CD4-positive, alpha-beta memory T cell (primary cell): ENCODE measurements at regions of chr11 and their contacts with region 1.

Region 1: GRCh38 chr11:83193315-83194280 is at the start of gene ANKRD42:
- DNase-seq: peak; percentile 88 to 92 (median 90)
- H3K4me3 ChIP-seq: peak within 1 kb of the TSS; percentile 90 to 99
- H3K4me3 Mint-ChIP-seq: peak within 1 kb of the TSS; percentile 98 to 100 (median 99)
- H3K27ac ChIP-seq: peak within 1 kb of the TSS; percentile 99
- H3K27ac Mint-ChIP-seq: peak within 1 kb of the TSS; percentile 99 to 100 (median 100)
- H3K4me1 ChIP-seq: peaks cover 39% of the 10 kb centered on the region
- H3K4me1 Mint-ChIP-seq: peaks cover 35 to 53% (median 41%) of the 10 kb centered on the region in 4 donors
- H3K27me3 ChIP-seq: no peaks in the 10 kb centered on the region
- H3K27me3 Mint-ChIP-seq: no peaks in the 10 kb centered on the region
- total RNA-seq, gene ANKRD42: 8.9 to 12.4 TPM

Region 2: DNA sequence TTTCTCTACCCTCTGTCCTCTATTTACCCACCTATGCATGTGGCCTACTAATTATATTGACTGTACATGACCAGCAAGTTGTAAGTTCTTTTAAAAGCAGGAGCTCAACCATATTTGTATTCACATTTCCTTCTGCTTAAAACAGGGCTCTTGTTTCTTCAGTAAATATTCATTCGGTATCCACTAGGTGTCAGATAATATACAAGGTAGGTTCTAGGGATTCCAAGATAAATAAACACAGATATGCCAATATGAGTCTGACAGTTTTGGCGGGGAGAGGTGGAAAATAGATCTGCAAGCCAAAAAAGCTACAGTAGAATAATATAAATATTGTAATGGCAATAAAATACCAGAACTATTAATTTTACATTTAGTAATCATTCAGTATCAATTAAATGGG is 106.6 kb before region 1 on chr11:
- CTCF ChIA-PET with region 1: no interaction called
- POLR2A ChIA-PET with region 1: no interaction called
- intact Hi-C with region 1: loop called (anchors 5 kb)
- DNase-seq: no peak
- H3K4me3 ChIP-seq: no peak overlapping the region
- H3K4me3 Mint-ChIP-seq: no peak overlapping the region
- H3K27ac ChIP-seq: no peak overlapping the region
- H3K27ac Mint-ChIP-seq: peak overlapping the region in 2 of 7 donors; percentile 32 to 58
- H3K4me1 ChIP-seq: no peaks in the 10 kb centered on the region
- H3K4me1 Mint-ChIP-seq: peaks cover 0 to 13% (median 11%) of the 10 kb centered on the region in 4 donors
- H3K27me3 ChIP-seq: no peaks in the 10 kb centered on the region
- H3K27me3 Mint-ChIP-seq: no peaks in the 10 kb centered on the region

Region 3: GRCh38 chr11:83102834-83103233 is 90.8 kb before region 1 on chr11:
- CTCF ChIA-PET with region 1: no interaction called
- POLR2A ChIA-PET with region 1: no interaction called
- intact Hi-C with region 1: no loop called
- DNase-seq: no peak
- H3K4me3 ChIP-seq: no peak overlapping the region
- H3K4me3 Mint-ChIP-seq: no peak overlapping the region
- H3K27ac ChIP-seq: no peak overlapping the region
- H3K27ac Mint-ChIP-seq: no peak overlapping the region
- H3K4me1 ChIP-seq: no peaks in the 10 kb centered on the region
- H3K4me1 Mint-ChIP-seq: no peaks in the 10 kb centered on the region
- H3K27me3 ChIP-seq: no peaks in the 10 kb centered on the region
- H3K27me3 Mint-ChIP-seq: peaks cover 2 to 7% of the 10 kb centered on the region in 2 donors

Region 4: DNA sequence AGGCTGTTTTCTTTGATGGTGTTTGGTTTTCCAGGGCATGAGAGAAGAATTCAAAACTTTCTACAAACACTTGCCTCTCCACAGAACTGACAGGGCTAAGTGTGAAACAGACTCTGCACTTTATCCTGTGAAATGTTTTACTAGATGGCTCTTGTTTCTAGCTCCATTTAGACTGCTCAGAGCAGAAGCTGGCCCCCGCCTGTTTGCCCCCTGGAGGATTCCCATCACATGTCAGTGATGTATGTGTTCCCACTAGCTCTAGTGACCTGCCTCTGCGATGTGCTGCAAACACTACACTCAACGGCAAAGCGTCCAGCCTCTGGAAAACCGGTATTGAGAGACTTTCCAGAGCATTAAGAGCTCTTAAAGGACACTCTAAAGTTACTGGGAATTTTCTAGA is 78.0 kb before region 1 on chr11:
- CTCF ChIA-PET with region 1: no interaction called
- POLR2A ChIA-PET with region 1: no interaction called
- intact Hi-C with region 1: loop called (anchors 1 kb)
- DNase-seq: no peak
- H3K4me3 ChIP-seq: no peak overlapping the region
- H3K4me3 Mint-ChIP-seq: peak overlapping the region; percentile 25 to 81 (median 64)
- H3K27ac ChIP-seq: no peak overlapping the region
- H3K27ac Mint-ChIP-seq: peak overlapping the region in 4 of 7 donors; percentile 54 to 84 (median 75)
- H3K4me1 ChIP-seq: peaks cover 44% of the 10 kb centered on the region
- H3K4me1 Mint-ChIP-seq: peaks cover 33 to 54% (median 34%) of the 10 kb centered on the region in 4 donors
- H3K27me3 ChIP-seq: no peaks in the 10 kb centered on the region
- H3K27me3 Mint-ChIP-seq: peaks cover 0 to 1% of the 10 kb centered on the region in 2 donors

Region 5: DNA sequence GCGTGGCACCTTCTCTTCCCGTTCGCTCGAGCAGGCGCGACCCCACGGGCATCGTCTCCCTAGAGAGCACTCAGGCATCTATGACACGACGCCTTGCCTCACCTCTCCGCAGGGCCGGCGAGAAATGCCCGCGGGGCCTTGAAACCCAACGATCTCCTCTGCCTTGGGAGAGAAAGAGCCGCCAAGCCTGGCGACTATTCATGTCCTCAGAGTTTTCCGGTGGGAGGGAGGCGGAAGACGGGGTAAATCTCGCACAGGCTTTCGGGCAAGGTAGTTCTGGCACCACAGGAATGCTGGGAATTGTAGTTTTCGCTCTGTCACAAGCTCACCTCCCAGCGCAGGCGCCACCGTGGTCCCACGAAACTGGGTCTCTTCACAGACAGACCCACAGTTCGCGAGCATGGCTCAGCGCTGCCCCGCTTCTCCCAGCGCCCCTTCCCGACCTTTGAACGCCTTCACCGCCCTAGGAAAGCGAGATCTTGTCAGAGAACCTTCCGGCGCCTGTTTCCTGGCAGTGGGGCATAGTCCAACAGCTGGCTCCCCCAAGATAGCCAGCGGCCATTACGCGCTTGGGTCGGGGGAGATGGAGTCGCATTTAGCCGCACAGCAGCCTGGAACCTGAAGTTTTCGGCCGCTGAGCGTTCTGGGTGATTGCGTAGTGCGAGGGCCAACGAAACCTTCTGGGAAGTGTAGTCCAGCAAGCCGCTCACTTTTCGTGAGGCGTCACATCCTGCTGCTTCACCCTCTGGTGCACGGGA is 92.4 kb after region 1 on chr11 and contains the start of gene CCDC90B:
- CTCF ChIA-PET with region 1: no interaction called
- POLR2A ChIA-PET with region 1: interaction called, 12 read pairs
- intact Hi-C with region 1: loop called (anchors 1 kb)
- DNase-seq: peak; percentile 95 to 97 (median 97)
- H3K4me3 ChIP-seq: peak within 1 kb of the TSS; percentile 89 to 92
- H3K4me3 Mint-ChIP-seq: peak within 1 kb of the TSS; percentile 94 to 99 (median 98)
- H3K27ac ChIP-seq: peak within 1 kb of the TSS; percentile 95
- H3K27ac Mint-ChIP-seq: peak within 1 kb of the TSS; percentile 98 to 100 (median 100)
- H3K4me1 ChIP-seq: peaks cover 42% of the 10 kb centered on the region
- H3K4me1 Mint-ChIP-seq: peaks cover 26 to 46% (median 34%) of the 10 kb centered on the region in 4 donors
- H3K27me3 ChIP-seq: no peaks in the 10 kb centered on the region
- H3K27me3 Mint-ChIP-seq: no peaks in the 10 kb centered on the region
- total RNA-seq, gene CCDC90B: 37.6 to 38.0 TPM

Region 6: GRCh38 chr11:83355391-83355790 is 161.8 kb after region 1 on chr11:
- CTCF ChIA-PET with region 1: no interaction called
- POLR2A ChIA-PET with region 1: no interaction called
- intact Hi-C with region 1: no loop called
- DNase-seq: no peak
- H3K4me3 ChIP-seq: no peak overlapping the region
- H3K4me3 Mint-ChIP-seq: no peak overlapping the region
- H3K27ac ChIP-seq: no peak overlapping the region
- H3K27ac Mint-ChIP-seq: no peak overlapping the region
- H3K4me1 ChIP-seq: no peaks in the 10 kb centered on the region
- H3K4me1 Mint-ChIP-seq: no peaks in the 10 kb centered on the region
- H3K27me3 ChIP-seq: no peaks in the 10 kb centered on the region
- H3K27me3 Mint-ChIP-seq: peaks cover 0 to 2% of the 10 kb centered on the region in 2 donors